Activated CD4-positive, alpha-beta memory T cell treated with anti-CD3 and anti-CD28 coated beads for 36 hours (primary cell): ENCODE measurements at regions of chr3 and their contacts with region 1.

Region 1: GRCh38 chr3:32684800-32685542 is at the start of gene CNOT10:
- DNase-seq: peak; percentile 98
- H3K4me3 Mint-ChIP-seq: peak within 1 kb of the TSS; percentile 91
- H3K27ac Mint-ChIP-seq: peak within 1 kb of the TSS; percentile 91
- H3K4me1 Mint-ChIP-seq: peaks cover 33% of the 10 kb centered on the region
- H3K27me3 Mint-ChIP-seq: no peaks in the 10 kb centered on the region
- total RNA-seq, gene CNOT10: 52.4 to 54.7 TPM

Region 2: DNA sequence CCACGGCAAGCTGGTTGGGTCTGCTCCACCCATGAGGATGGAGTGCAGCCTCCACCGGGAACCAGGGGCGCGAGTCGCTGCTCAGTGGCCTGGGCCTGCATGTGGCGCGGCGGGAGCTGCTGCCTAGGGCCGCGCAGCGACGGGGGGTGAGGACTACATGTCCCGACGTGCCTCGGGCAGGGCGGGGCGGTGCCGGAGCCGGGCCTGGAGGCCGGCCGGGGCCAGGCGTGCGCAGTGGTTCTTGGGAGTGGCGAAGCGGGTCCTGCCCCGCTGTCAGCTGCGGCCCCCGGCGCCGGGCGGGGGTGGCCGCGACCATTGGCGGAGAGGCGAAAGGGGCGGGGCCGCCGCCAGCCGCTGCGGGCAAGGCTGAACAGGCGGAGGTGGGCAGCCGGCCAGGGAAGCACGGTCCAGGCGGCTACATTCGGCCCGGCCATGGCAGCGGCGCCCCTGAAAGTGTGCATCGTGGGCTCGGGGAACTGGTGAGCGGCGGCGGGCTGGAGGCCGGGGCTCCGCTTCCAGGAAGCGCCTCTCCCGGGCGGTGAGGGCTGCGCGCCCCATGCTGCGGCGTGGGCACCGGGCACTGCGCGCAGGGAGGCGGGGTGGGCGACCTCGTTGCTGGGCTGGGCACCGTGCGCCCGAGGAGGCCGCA is 578.6 kb before region 1 on chr3 and contains the start of gene GPD1L:
- CTCF ChIA-PET with region 1: no interaction called
- POLR2A ChIA-PET with region 1: no interaction called
- intact Hi-C with region 1: loop called (anchors 1 kb)
- DNase-seq: peak; percentile 95
- H3K4me3 Mint-ChIP-seq: peak within 1 kb of the TSS; percentile 94
- H3K27ac Mint-ChIP-seq: peak within 1 kb of the TSS; percentile 76
- H3K4me1 Mint-ChIP-seq: peaks cover 37% of the 10 kb centered on the region
- H3K27me3 Mint-ChIP-seq: no peaks in the 10 kb centered on the region
- total RNA-seq, gene GPD1L: 10.9 to 12.2 TPM

Region 3: DNA sequence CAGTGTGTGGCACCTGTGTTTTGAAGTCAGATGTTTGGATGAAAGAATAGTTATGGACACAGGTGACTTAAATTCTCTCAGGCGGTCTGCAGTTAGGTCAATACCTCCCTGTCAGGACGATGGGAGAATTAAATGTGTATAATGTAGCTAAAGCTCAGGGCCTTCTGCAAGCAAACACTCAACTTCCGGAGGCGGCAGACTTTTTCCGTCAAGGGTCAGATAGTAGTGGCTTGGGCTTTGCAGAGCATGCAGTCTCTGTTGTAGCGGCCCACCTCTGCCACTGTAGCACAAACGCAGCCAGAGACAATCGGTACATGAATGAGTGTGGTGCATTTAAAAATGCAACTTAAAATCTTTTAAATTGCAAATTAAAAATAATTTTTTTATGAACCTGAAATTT is 399.1 kb before region 1 on chr3:
- CTCF ChIA-PET with region 1: no interaction called
- POLR2A ChIA-PET with region 1: no interaction called
- intact Hi-C with region 1: loop called (anchors 2 kb)
- DNase-seq: peak; percentile 45
- H3K4me3 Mint-ChIP-seq: no peak overlapping the region
- H3K27ac Mint-ChIP-seq: peak overlapping the region; percentile 69
- H3K4me1 Mint-ChIP-seq: peaks cover 48% of the 10 kb centered on the region
- H3K27me3 Mint-ChIP-seq: no peaks in the 10 kb centered on the region

Region 4: GRCh38 chr3:32502118-32502945 is 182.6 kb before region 1 on chr3 and contains the start of gene CMTM6:
- CTCF ChIA-PET with region 1: interaction called, 3 read pairs
- POLR2A ChIA-PET with region 1: no interaction called
- intact Hi-C with region 1: loop called (anchors 1 kb)
- DNase-seq: peak; percentile 84
- H3K4me3 Mint-ChIP-seq: peak within 1 kb of the TSS; percentile 100
- H3K27ac Mint-ChIP-seq: peak within 1 kb of the TSS; percentile 97
- H3K4me1 Mint-ChIP-seq: peaks cover 32% of the 10 kb centered on the region
- H3K27me3 Mint-ChIP-seq: no peaks in the 10 kb centered on the region
- total RNA-seq, gene CMTM6: 87.7 to 89.1 TPM

Region 5: DNA sequence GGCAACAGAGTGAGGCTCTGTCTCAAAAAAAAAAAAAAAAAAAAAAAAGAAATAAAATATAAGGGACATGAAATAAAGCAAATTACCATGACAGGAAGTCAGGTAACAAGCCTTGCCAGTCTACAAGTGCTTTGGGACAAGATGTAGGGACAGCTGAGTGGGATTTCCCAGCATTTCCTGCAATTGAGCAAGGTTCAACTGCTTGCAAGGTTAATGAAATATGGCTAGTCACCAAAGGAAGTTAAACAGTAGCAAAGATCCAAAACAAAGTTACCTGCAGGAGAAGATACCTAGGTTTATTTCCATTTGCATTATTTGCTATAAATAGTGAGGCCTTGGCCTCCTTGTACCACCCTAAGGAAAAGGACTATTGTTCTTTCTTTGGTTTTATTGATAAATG is 22.3 kb before region 1 on chr3:
- CTCF ChIA-PET with region 1: no interaction called
- POLR2A ChIA-PET with region 1: no interaction called
- intact Hi-C with region 1: no loop called
- DNase-seq: no peak
- H3K4me3 Mint-ChIP-seq: no peak overlapping the region
- H3K27ac Mint-ChIP-seq: no peak overlapping the region
- H3K4me1 Mint-ChIP-seq: no peaks in the 10 kb centered on the region
- H3K27me3 Mint-ChIP-seq: peaks cover 6% of the 10 kb centered on the region

Region 6: DNA sequence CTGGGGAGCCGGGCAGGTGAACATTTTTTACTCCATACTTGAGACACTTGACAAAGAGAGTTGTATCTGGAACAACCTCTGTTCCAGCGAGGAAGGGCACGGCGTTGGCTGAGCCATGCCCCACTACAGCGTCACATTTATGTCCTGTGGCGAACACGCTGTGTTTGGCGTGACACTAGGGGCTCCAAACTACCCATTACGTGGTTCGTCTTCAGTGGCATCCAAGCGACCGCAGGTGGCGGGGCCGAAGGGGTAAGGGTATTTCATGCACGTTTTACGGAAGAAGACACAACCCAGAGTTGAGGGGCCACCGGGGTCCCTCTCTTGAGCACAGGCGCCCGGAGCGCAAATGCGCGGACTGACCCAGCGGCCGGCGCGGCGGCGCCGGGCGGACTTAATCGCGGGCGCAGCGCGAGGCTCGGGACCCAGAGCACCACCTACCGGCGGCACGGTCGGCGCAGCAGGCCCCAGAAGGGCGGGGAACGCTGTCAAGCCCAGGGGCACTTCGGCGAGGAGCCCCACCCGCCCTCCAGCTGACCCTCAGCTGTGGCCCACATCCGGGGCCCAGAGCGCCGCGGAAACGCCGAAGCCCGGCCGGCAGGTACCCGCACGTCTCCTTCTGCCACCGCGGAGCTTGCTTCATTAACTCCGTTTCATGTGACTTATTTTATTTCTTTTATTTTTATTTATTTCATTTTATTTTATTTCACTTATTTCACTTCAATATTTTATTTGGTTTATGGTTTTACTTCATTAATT is 96.4 kb after region 1 on chr3:
- CTCF ChIA-PET with region 1: no interaction called
- POLR2A ChIA-PET with region 1: no interaction called
- intact Hi-C with region 1: loop called (anchors 5 kb)
- DNase-seq: peak; percentile 80
- H3K4me3 Mint-ChIP-seq: peak overlapping the region; percentile 83
- H3K27ac Mint-ChIP-seq: no peak overlapping the region
- H3K4me1 Mint-ChIP-seq: peaks cover 10% of the 10 kb centered on the region
- H3K27me3 Mint-ChIP-seq: peaks cover 13% of the 10 kb centered on the region

Region 7: GRCh38 chr3:33440323-33441232 is 755.6 kb after region 1 on chr3 and contains the start of gene UBP1:
- CTCF ChIA-PET with region 1: no interaction called
- POLR2A ChIA-PET with region 1: interaction called, 4 read pairs
- intact Hi-C with region 1: loop called (anchors 1 kb)
- DNase-seq: peak; percentile 99
- H3K4me3 Mint-ChIP-seq: peak within 1 kb of the TSS; percentile 100
- H3K27ac Mint-ChIP-seq: peak within 1 kb of the TSS; percentile 100
- H3K4me1 Mint-ChIP-seq: peaks cover 39% of the 10 kb centered on the region
- H3K27me3 Mint-ChIP-seq: no peaks in the 10 kb centered on the region
- total RNA-seq, gene UBP1: 52.6 to 53.2 TPM